Natural killer cell (primary cell): ENCODE measurements at regions of chr15 and their contacts with region 1.

Region 1: GRCh38 chr15:45457641-45458433 is 64.7 kb downstream of the SLC30A4 start:
- DNase-seq: peak; percentile 55 to 92
- ATAC-seq: peak; percentile 70 to 81 (median 76)
- H3K4me3 ChIP-seq: peak overlapping the region; percentile 36
- H3K4me3 Mint-ChIP-seq: peak overlapping the region; percentile 91
- H3K27ac ChIP-seq: peak overlapping the region; percentile 58
- H3K27ac Mint-ChIP-seq: peak overlapping the region; percentile 84 to 95
- H3K4me1 ChIP-seq: peaks cover 32% of the 10 kb centered on the region
- H3K4me1 Mint-ChIP-seq: peaks cover 21 to 26% of the 10 kb centered on the region in 2 donors
- H3K27me3 ChIP-seq: no peaks in the 10 kb centered on the region
- H3K27me3 Mint-ChIP-seq: no peaks in the 10 kb centered on the region
- CTCF ChIP-seq: peak; percentile 94

Region 2: DNA sequence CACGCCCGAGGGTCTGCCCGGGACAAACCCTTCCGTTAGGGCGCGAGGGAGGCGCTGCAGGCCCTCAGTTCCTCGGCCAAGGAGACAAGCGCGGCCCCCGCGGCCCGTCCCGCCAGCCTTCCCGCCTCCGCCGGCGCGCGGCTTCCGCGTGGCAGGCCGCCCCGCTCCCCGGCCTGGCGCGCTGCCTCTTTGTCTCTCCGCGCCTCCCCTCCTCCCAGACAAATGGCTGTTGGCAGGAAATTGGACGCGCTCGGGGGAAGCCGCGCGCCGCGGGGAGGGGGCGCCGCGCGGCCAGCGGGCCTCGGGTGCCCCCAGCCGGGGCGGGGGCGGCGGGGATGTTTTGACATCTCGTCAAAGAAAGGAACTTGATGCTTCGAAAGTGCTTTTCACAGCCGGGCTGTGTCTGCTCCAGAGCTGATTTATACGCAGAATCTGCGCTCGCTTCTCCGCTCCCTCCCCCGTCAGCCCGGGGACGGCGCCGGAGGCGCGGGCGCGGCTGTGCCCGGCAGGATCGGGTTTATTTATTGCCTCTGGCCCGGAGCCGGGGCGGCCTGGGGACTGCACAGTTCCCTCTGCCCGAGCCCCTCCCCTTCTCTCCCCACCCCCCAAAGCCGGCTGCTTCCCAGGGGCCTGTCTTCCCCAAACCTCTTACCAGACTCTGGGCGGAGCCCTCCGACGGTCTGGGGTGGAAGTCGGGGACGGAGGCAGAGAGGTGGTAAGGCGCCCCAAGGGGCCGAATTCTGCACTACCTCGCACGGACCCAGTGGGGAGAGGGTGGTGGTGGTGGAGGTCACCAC is 290.8 kb before region 1 on chr15:
- intact Hi-C with region 1: loop called (anchors 1 kb)
- DNase-seq: peak; percentile 71 to 89
- ATAC-seq: peak; percentile 92 to 95 (median 94)
- H3K4me3 ChIP-seq: peak overlapping the region; percentile 70
- H3K4me3 Mint-ChIP-seq: peak overlapping the region; percentile 77
- H3K27ac ChIP-seq: peak overlapping the region; percentile 81
- H3K27ac Mint-ChIP-seq: peak overlapping the region; percentile 46 to 81
- H3K4me1 ChIP-seq: peaks cover 34% of the 10 kb centered on the region
- H3K4me1 Mint-ChIP-seq: peaks cover 6 to 35% of the 10 kb centered on the region in 2 donors
- H3K27me3 ChIP-seq: no peaks in the 10 kb centered on the region
- H3K27me3 Mint-ChIP-seq: no peaks in the 10 kb centered on the region
- CTCF ChIP-seq: peak; percentile 66

Region 3: DNA sequence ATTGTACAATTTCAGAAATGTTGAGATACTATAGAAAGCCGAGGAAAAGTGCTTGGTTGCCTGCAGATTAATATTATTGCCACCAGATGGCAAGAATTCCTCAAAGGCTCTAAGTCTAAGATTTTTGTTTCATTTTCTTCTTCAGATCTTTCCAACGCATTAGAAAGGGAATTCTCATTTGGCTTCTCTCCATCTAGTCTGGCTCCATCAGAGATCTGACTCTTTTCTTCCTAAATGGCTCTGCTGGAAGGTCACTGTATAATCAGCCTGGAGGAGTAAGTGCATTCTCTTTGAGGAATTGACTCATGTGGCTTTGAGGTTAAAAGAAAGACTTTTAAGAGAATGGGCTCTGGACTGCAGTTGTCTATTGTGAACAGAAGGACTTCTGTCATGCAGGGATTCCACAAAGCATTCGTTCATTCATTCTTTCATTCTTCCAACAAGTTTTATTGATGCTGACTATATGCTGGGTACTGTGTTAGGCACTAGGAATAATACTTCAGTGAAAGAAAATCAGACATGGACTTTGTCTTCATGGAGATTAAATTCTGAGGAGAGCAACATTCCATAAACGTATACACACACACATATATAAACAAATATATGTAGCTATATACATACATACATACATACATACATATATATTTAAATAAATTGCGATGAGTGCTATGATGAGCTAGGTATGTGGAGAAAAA is 150.5 kb before region 1 on chr15:
- intact Hi-C with region 1: loop called (anchors 5 kb)
- DNase-seq: peak in 1 of 2 donors; percentile 36
- ATAC-seq: peak in 2 of 3 donors; percentile 64 to 66
- H3K4me3 ChIP-seq: no peak overlapping the region
- H3K4me3 Mint-ChIP-seq: peak overlapping the region; percentile 79
- H3K27ac ChIP-seq: no peak overlapping the region
- H3K27ac Mint-ChIP-seq: peak overlapping the region in 1 of 2 donors; percentile 44
- H3K4me1 ChIP-seq: no peaks in the 10 kb centered on the region
- H3K4me1 Mint-ChIP-seq: peaks cover 9 to 11% of the 10 kb centered on the region in 2 donors
- H3K27me3 ChIP-seq: peaks cover 14% of the 10 kb centered on the region
- H3K27me3 Mint-ChIP-seq: peaks cover 25 to 30% of the 10 kb centered on the region in 2 donors
- CTCF ChIP-seq: peak; percentile 49

Region 4: DNA sequence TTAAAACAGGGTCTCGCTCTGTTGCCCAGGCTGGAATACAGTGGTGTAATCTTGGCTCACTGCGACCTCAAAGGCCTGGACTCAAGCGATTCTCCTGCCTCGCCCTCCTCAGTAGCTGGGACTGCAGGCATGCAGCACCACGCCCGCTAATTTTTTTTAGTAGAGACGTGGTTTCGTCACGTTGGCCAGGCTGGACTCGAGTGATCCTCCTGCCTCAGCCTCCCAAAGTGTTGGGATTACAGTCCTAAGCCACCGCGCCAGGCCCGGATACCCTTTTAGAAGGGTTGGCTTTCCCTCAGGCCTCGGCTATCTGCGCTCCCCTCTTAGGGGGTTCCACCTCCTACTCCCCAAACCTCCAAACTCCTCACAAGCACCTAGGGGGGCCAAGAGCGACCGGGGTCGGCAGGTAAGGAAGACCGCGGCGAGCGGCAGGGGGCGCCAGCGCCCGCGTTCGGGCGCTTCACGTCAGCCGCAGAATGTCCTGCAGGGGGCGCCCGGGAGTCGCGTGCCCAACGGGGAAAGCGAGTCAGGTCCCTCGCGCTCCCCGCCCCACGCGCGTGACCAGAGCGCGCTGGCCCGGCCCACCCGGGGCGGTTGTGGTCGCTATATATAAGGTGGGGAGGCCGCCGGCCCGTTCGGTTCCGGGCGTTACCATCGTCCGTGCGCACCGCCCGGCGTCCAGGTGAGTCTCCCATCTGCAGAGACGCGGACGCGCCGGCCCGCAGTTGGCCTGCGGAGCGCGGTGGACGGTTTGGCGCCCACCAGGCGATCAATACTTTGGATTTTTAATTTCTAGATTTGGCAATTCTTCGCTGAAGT is 27.7 kb before region 1 on chr15:
- intact Hi-C with region 1: loop called (anchors 1 kb)
- DNase-seq: peak; percentile 83 to 92
- ATAC-seq: peak; percentile 93 to 98 (median 97)
- H3K4me3 ChIP-seq: peak overlapping the region; percentile 27
- H3K4me3 Mint-ChIP-seq: peak overlapping the region; percentile 69
- H3K27ac ChIP-seq: no peak overlapping the region
- H3K27ac Mint-ChIP-seq: no peak overlapping the region
- H3K4me1 ChIP-seq: peaks cover 8% of the 10 kb centered on the region
- H3K4me1 Mint-ChIP-seq: no peaks in the 10 kb centered on the region
- H3K27me3 ChIP-seq: no peaks in the 10 kb centered on the region
- H3K27me3 Mint-ChIP-seq: peaks cover 0 to 2% of the 10 kb centered on the region in 2 donors
- CTCF ChIP-seq: peak; percentile 100

Region 5: DNA sequence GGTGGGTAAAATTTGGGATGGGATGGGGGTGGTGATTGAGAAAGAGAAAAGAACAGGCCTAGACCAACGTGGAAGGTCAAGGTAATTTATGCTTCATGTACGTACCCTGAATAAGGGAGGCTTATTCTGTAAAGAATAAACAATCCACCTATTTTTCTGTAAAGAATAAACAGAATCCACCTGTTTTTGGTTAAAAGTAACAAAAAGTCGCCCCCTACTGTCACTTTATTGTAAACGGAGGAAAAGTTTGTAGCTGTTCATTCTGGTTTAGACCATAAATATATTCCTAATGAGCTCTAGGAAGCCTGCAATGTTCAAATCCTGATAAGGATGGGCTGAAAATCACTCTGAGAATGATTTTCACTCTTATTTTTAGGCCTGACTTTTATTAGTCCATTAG is 153.5 kb after region 1 on chr15:
- intact Hi-C with region 1: loop called (anchors 1 kb)
- DNase-seq: peak in 1 of 2 donors; percentile 41
- ATAC-seq: no peak
- H3K4me3 ChIP-seq: no peak overlapping the region
- H3K4me3 Mint-ChIP-seq: no peak overlapping the region
- H3K27ac ChIP-seq: no peak overlapping the region
- H3K27ac Mint-ChIP-seq: no peak overlapping the region
- H3K4me1 ChIP-seq: no peaks in the 10 kb centered on the region
- H3K4me1 Mint-ChIP-seq: no peaks in the 10 kb centered on the region
- H3K27me3 ChIP-seq: no peaks in the 10 kb centered on the region
- H3K27me3 Mint-ChIP-seq: no peaks in the 10 kb centered on the region
- CTCF ChIP-seq: peak; percentile 40